Activated CD8-positive, alpha-beta T cell treated with anti-CD3 and anti-CD28 coated beads for 36 hours (primary cell): ENCODE measurements at regions of chr10 and their contacts with region 1.

Region 1: DNA sequence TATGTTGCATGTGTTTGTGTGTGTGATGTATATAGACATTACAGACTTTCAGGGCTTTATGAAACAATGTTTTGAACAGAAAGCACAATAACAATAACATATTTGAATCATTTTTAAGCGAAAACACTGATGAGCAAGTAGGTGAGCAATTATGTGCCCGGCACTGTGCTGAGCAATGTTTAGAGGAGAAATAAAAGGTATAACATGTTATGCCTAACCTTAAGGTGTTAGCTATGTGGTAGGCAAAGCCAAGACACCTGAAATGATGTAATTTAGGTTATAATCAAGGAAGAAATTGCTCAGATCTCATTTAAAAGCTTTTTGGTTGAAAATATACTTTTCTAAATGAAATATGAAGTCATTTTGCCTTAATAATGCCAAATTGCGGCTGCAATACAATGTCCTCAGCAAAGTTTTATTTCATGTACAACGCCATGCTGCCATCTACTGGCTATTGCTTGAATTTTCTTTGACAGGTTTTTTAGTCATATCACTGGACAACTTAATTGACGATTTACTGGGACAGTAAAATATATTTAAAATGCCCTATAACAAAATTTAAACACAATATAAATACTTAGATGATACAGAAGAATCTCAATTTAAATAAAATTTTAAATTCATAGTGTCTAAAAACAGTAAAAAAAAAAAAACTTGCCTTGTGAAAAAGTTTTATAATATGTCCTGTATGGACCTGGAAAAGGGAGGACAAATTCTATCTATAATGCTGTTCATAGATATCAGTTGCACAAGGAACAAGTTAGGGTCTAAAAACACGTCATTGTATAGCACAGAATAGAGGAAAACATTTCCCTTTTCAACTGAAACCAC is 131.1 kb upstream of the CDK1 start:
- DNase-seq: peak; percentile 46
- ATAC-seq: peak; percentile 58
- H3K4me3 Mint-ChIP-seq: no peak overlapping the region
- H3K27ac Mint-ChIP-seq: no peak overlapping the region
- H3K4me1 Mint-ChIP-seq: peaks cover 5% of the 10 kb centered on the region
- H3K27me3 Mint-ChIP-seq: no peaks in the 10 kb centered on the region
- CTCF ChIP-seq: peak; percentile 77

Region 2: DNA sequence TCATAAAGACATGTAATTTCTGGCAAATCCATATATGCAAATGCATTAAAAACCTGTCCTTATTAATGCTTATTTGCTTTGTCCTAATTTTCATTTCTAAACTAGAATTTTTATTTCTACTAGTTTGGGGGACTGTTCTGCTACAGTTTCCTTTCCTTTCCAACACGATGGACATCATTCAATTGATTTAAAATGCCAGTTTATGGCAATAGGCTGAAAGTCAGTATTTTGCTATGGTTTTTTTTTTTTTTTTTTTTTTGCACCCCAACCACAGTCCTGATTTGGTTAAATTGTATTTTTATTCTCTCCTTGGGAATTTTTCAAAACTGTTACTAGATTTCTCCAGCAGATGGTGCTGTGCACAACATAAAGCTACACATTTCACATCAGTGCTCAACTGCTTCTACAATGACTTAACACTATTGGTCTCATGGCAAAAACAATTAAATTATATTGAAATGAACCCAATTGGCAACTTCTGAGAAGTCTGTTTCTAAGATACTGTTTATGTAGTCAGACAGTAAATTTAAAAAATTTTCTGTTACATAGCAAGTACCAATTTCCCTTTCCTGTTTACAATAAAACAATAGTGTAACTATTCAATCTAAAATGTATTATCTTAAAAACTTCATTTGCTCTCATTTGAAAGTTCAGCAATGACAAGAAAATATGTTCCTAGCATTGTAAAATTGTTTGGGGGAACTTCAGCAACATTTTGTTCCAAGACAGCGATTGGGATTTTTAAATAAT is 547.0 kb before region 1 on chr10:
- CTCF ChIA-PET with region 1: interaction called, 19 read pairs
- POLR2A ChIA-PET with region 1: no interaction called
- intact Hi-C with region 1: no loop called
- DNase-seq: peak; percentile 9
- ATAC-seq: no peak
- H3K4me3 Mint-ChIP-seq: no peak overlapping the region
- H3K27ac Mint-ChIP-seq: no peak overlapping the region
- H3K4me1 Mint-ChIP-seq: no peaks in the 10 kb centered on the region
- H3K27me3 Mint-ChIP-seq: peaks cover 2% of the 10 kb centered on the region
- CTCF ChIP-seq: peak; percentile 75

Region 3: DNA sequence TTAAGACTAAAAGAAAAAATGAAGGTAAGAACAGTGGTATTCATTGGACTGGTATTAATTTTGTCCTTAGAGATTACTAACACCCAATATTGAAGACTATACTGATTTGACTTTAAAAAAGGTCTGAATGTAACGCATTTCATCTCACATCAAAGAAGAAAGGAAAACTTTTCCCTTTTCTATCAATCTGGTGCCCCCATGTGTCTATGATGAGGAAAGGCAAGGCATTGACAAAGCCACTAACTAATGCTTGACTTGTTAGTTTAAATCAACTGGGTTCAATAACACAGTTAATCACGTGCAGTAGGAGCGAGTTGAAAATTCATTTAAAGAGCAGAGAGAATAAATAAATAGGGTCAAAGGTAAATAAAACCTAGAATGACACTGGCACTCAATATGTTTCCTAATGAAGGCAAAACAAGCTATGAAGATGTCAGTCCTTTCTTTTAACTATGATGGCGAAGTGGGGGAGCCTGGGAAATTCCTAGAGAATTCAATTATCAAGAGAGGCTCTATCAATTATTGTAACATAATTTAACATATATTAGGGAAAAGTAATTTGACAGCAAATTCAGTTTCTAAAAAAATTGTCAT is 438.4 kb before region 1 on chr10:
- CTCF ChIA-PET with region 1: interaction called, 4 read pairs
- POLR2A ChIA-PET with region 1: no interaction called
- intact Hi-C with region 1: loop called (anchors 10 kb)
- DNase-seq: no peak
- ATAC-seq: no peak
- H3K4me3 Mint-ChIP-seq: no peak overlapping the region
- H3K27ac Mint-ChIP-seq: no peak overlapping the region
- H3K4me1 Mint-ChIP-seq: peaks cover 8% of the 10 kb centered on the region
- H3K27me3 Mint-ChIP-seq: peaks cover 2% of the 10 kb centered on the region
- CTCF ChIP-seq: peak; percentile 60

Region 4: DNA sequence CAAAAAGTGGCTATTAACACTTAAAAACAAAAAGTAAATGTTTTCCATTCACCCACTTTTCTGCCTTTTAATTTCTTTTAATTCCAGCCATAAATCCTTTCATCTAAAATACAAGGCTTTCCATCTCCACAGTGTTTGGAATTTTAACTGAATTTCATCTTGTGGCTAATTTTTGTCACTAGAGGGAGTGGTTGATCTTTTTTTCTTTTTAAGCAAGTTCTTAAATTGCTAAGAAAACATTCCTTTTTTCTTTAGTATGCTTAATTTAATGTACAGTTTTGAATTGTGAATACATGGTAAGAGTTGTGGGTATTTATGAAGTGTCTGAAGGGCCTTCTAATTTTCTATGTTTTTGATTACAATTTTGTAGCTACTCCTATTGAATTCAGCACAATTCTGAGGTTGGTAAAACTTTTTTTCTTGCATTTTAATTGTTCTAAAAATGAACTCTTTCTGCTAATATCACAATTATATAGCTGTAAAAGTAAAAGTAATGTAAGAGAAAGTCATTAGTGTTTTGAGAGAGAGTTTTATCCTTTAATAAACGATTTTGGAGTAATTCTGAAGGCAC is 202.6 kb before region 1 on chr10:
- CTCF ChIA-PET with region 1: interaction called, 27 read pairs
- POLR2A ChIA-PET with region 1: no interaction called
- intact Hi-C with region 1: loop called (anchors 2 kb)
- DNase-seq: no peak
- ATAC-seq: no peak
- H3K4me3 Mint-ChIP-seq: no peak overlapping the region
- H3K27ac Mint-ChIP-seq: no peak overlapping the region
- H3K4me1 Mint-ChIP-seq: peaks cover 11% of the 10 kb centered on the region
- H3K27me3 Mint-ChIP-seq: no peaks in the 10 kb centered on the region
- CTCF ChIP-seq: peak; percentile 57

Region 5: GRCh38 chr10:60549686-60550085 is 97.5 kb before region 1 on chr10:
- CTCF ChIA-PET with region 1: interaction called, 6 read pairs
- POLR2A ChIA-PET with region 1: interaction called, 3 read pairs
- intact Hi-C with region 1: loop called (anchors 10 kb)
- DNase-seq: no peak
- ATAC-seq: peak; percentile 30
- H3K4me3 Mint-ChIP-seq: no peak overlapping the region
- H3K27ac Mint-ChIP-seq: no peak overlapping the region
- H3K4me1 Mint-ChIP-seq: no peaks in the 10 kb centered on the region
- H3K27me3 Mint-ChIP-seq: no peaks in the 10 kb centered on the region
- CTCF ChIP-seq: peak; percentile 47

Region 6: GRCh38 chr10:60629332-60629731 is 17.8 kb before region 1 on chr10:
- CTCF ChIA-PET with region 1: interaction called, 24 read pairs
- POLR2A ChIA-PET with region 1: no interaction called
- intact Hi-C with region 1: no loop called
- DNase-seq: no peak
- ATAC-seq: no peak
- H3K4me3 Mint-ChIP-seq: no peak overlapping the region
- H3K27ac Mint-ChIP-seq: no peak overlapping the region
- H3K4me1 Mint-ChIP-seq: no peaks in the 10 kb centered on the region
- H3K27me3 Mint-ChIP-seq: peaks cover 1% of the 10 kb centered on the region
- CTCF ChIP-seq: no peak

Region 7: GRCh38 chr10:60704480-60704879 is 57.3 kb after region 1 on chr10:
- CTCF ChIA-PET with region 1: no interaction called
- POLR2A ChIA-PET with region 1: no interaction called
- intact Hi-C with region 1: no loop called
- DNase-seq: no peak
- ATAC-seq: no peak
- H3K4me3 Mint-ChIP-seq: no peak overlapping the region
- H3K27ac Mint-ChIP-seq: no peak overlapping the region
- H3K4me1 Mint-ChIP-seq: peaks cover 11% of the 10 kb centered on the region
- H3K27me3 Mint-ChIP-seq: peaks cover 2% of the 10 kb centered on the region
- CTCF ChIP-seq: no peak